ENCODE measurements at regions of chr4 and their contacts with region 1.

Region 1: GRCh38 chr4:99998062-99998867 is 48.2 kb upstream of the H2AZ1 start:
- DNase-seq: peak; percentile 44
- H3K4me3 Mint-ChIP-seq: no peak overlapping the region
- H3K27ac Mint-ChIP-seq: peak overlapping the region; percentile 80
- H3K4me1 Mint-ChIP-seq: peaks cover 10% of the 10 kb centered on the region
- H3K27me3 Mint-ChIP-seq: no peaks in the 10 kb centered on the region
- CTCF ChIP-seq: peak; percentile 51

Region 2: DNA sequence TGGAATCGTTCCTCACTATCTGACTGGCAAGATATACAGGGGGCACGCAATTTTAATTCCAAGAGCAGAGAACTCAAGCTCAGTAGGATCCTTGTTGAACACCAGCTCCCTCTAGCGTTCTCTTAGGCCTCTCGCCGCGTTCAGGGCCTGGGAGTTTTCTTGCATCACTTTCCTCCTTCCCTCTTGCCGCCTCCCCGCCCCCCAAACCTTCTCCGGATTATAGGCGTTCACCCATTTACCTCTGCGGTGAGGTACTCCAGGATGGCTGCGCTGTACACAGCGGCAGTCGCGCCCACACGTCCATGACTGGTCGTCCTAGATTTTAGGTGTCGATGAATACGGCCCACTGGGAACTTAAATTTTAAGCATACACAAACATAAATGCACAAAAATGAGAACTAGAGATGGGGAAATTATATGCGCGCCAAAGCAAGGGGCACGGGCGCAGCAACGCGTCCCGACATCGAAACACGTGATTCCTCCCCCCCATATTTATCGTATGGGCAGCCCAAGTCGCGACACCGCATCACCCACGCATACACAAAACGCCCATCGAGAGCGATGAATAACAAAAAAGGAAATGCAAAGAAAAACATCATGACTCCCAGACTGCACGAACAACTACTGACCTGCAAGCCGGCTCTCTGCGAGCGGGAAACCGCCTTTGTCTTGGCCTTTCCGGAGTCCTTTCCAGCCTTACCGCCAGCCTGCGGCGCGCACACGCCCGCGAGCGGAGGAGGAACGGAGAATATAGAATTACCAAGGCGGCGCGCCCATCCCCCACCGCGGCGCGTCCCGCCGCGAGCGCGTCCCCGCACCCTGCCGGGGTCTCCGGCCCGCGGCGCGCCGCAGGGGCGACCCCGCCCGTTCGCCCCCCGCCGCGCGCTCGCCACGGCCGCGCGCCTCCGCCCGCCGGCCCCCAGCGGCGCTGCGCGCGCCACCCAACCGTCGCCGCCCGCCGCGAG is 48.9 kb before region 1 on chr4:
- CTCF ChIA-PET with region 1: no interaction called
- POLR2A ChIA-PET with region 1: no interaction called
- intact Hi-C with region 1: loop called (anchors 5 kb)
- DNase-seq: peak; percentile 99
- H3K4me3 Mint-ChIP-seq: no peak overlapping the region
- H3K27ac Mint-ChIP-seq: no peak overlapping the region
- H3K4me1 Mint-ChIP-seq: peaks cover 11% of the 10 kb centered on the region
- H3K27me3 Mint-ChIP-seq: no peaks in the 10 kb centered on the region
- CTCF ChIP-seq: peak; percentile 76

Region 3: GRCh38 chr4:100009490-100009889 is 11.2 kb after region 1 on chr4:
- CTCF ChIA-PET with region 1: interaction called, 18 read pairs
- POLR2A ChIA-PET with region 1: interaction called, 5 read pairs
- intact Hi-C with region 1: no loop called
- DNase-seq: no peak
- H3K4me3 Mint-ChIP-seq: no peak overlapping the region
- H3K27ac Mint-ChIP-seq: no peak overlapping the region
- H3K4me1 Mint-ChIP-seq: peaks cover 6% of the 10 kb centered on the region
- H3K27me3 Mint-ChIP-seq: no peaks in the 10 kb centered on the region
- CTCF ChIP-seq: no peak

Region 4: DNA sequence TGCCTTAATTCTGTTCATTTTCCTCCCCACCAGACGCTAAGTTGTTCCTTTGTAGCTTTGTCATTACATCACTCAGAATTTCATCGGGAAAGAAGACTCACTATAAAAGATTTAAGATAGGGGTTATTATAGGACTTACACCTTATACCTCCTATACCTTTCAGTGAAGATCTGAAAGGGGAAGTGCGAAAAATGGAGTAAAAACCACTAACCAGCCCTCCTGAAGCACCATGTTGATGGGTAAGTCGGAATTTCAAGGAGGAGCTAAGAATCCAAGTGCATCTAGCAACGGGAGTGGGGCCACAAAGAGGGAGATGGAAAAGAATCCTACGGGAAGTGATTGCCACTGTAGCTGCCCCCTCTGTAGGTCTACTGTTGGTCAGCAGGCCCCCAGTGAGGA is 70.9 kb after region 1 on chr4:
- CTCF ChIA-PET with region 1: interaction called, 42 read pairs
- POLR2A ChIA-PET with region 1: interaction called, 6 read pairs
- intact Hi-C with region 1: no loop called
- DNase-seq: no peak
- H3K4me3 Mint-ChIP-seq: no peak overlapping the region
- H3K27ac Mint-ChIP-seq: no peak overlapping the region
- H3K4me1 Mint-ChIP-seq: no peaks in the 10 kb centered on the region
- H3K27me3 Mint-ChIP-seq: no peaks in the 10 kb centered on the region
- CTCF ChIP-seq: no peak

Region 5: GRCh38 chr4:100093091-100093866 is 95.0 kb after region 1 on chr4:
- CTCF ChIA-PET with region 1: interaction called, 53 read pairs
- POLR2A ChIA-PET with region 1: interaction called, 6 read pairs
- intact Hi-C with region 1: no loop called
- DNase-seq: peak; percentile 94
- H3K4me3 Mint-ChIP-seq: no peak overlapping the region
- H3K27ac Mint-ChIP-seq: peak overlapping the region; percentile 87
- H3K4me1 Mint-ChIP-seq: peaks cover 19% of the 10 kb centered on the region
- H3K27me3 Mint-ChIP-seq: no peaks in the 10 kb centered on the region
- CTCF ChIP-seq: peak; percentile 66

Region 6: GRCh38 chr4:100742045-100742444 is 743.8 kb after region 1 on chr4:
- CTCF ChIA-PET with region 1: no interaction called
- POLR2A ChIA-PET with region 1: no interaction called
- intact Hi-C with region 1: loop called (anchors 5 kb)
- DNase-seq: peak; percentile 77
- H3K4me3 Mint-ChIP-seq: no peak overlapping the region
- H3K27ac Mint-ChIP-seq: no peak overlapping the region
- H3K4me1 Mint-ChIP-seq: peaks cover 22% of the 10 kb centered on the region
- H3K27me3 Mint-ChIP-seq: no peaks in the 10 kb centered on the region
- CTCF ChIP-seq: peak; percentile 53